Calu3 (cell line): ENCODE measurements at regions of chr3 and their contacts with region 1.

Region 1: DNA sequence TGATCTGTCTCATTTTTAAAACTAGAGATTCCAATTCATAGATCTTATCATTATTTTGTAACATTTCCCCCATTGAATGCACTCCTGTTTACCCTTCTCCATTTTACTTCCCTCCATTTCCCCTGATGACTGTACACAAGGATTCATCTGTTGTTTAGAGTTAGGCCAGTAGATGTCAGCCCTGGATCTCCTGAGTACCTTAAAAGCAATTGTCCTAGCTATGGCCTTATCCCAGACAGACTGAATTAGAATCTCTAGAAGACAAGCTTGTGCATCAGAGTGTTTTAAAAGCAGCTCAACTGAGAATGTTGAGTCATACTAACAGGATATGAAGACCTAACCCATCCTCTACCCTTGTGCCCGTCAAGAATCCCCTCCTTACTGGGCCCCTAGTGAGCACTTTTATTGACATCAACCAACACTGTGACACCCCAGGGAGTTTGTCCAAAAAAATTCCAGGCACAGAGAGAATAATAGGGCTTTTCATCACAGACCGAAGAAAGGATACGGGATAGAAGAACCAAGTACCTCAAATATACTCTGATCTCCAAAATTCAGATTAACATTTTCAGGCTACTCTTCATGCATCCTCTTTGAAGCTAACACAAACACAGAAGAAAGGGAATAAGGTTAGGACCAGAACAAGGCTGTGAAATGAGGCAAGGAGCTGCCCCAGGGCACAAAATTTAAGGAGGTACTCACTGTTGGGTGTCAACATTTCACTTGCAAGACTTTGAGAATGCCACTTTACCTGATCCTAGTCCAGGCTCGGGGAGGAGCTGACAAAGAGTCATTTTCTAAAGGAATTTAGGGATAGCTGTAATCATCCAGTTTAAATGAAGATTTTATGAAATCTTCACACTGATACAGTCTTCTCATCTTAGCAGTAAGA is 17.1 kb downstream of the ZBED2 start:
- DNase-seq: peak; percentile 32
- H3K4me3 Mint-ChIP-seq: no peak overlapping the region
- H3K27ac Mint-ChIP-seq: no peak overlapping the region
- H3K4me1 Mint-ChIP-seq: peaks cover 33% of the 10 kb centered on the region
- H3K27me3 Mint-ChIP-seq: no peaks in the 10 kb centered on the region
- CTCF ChIP-seq: no peak

Region 2: DNA sequence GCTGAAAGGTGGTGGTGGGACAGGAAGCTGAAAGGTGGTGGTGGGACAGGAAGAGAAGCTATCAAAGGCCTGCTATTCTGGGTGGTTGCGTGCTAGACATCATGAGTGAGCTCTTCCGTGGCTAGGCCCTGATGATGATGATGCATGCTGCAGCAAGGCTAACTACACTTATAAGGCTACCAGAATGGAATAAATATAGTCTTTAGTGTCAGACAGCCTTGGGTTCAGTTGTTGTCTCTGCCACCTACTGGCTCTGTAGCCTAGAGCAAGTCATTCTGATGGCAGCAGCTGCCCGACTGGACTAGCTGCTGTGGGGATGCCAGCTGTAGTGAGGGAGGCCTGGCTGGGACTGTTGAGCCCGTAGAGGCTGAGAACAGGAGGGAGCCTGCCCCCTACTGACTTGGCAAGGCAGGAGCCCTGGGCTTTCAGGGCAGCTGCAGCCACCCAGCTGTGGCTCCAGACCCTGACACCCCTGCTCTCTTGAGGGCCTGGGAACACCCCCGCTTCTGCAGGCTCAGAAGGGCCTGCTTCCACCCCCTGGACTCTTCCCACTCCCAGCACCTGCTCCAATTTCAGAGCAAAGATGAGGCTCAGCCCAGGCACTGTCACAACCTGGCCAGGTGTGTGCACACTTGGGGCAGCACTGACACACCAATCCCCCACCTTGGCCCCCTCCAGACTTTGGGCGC is 38.5 kb after region 1 on chr3:
- CTCF ChIA-PET with region 1: interaction called, 44 read pairs
- intact Hi-C with region 1: loop called (anchors 1 kb)
- DNase-seq: peak; percentile 67
- H3K4me3 Mint-ChIP-seq: no peak overlapping the region
- H3K27ac Mint-ChIP-seq: no peak overlapping the region
- H3K4me1 Mint-ChIP-seq: no peaks in the 10 kb centered on the region
- H3K27me3 Mint-ChIP-seq: no peaks in the 10 kb centered on the region
- CTCF ChIP-seq: peak; percentile 34

Region 3: DNA sequence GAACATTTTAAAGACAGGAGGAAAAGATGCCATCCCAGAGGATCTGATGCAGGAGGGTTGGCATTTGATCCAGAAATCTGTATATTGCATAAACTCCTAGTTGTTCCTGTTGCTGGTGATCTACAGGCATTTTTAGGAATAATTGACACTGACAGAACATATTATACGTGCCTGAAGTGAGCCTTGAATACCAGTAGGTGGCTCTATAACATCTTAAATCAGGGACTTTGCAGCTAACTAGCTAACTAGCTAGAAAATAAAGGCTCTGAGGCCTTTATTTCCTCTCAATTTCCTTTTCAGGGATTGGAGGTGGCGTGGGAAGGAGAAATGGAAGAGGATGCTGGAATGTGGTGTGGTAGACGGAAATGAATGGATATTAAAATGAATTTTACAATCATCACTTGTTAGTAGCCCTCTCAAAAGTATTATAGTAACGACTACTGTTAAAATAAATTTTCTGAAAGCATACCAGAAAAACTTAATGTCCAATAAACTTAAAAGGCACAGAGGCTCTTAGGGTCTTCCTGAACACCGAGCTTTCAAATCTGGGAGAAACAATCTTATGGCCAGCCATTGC is 91.0 kb after region 1 on chr3:
- CTCF ChIA-PET with region 1: interaction called, 18 read pairs
- intact Hi-C with region 1: loop called (anchors 5 kb)
- DNase-seq: no peak
- H3K4me3 Mint-ChIP-seq: no peak overlapping the region
- H3K27ac Mint-ChIP-seq: no peak overlapping the region
- H3K4me1 Mint-ChIP-seq: peaks cover 33% of the 10 kb centered on the region
- H3K27me3 Mint-ChIP-seq: no peaks in the 10 kb centered on the region
- CTCF ChIP-seq: peak; percentile 32

Region 4: GRCh38 chr3:111691293-111691909 is 113.4 kb after region 1 on chr3:
- CTCF ChIA-PET with region 1: interaction called, 22 read pairs
- intact Hi-C with region 1: loop called (anchors 2 kb)
- DNase-seq: no peak
- H3K4me3 Mint-ChIP-seq: no peak overlapping the region
- H3K27ac Mint-ChIP-seq: no peak overlapping the region
- H3K4me1 Mint-ChIP-seq: peaks cover 9% of the 10 kb centered on the region
- H3K27me3 Mint-ChIP-seq: no peaks in the 10 kb centered on the region
- CTCF ChIP-seq: no peak

Region 5: DNA sequence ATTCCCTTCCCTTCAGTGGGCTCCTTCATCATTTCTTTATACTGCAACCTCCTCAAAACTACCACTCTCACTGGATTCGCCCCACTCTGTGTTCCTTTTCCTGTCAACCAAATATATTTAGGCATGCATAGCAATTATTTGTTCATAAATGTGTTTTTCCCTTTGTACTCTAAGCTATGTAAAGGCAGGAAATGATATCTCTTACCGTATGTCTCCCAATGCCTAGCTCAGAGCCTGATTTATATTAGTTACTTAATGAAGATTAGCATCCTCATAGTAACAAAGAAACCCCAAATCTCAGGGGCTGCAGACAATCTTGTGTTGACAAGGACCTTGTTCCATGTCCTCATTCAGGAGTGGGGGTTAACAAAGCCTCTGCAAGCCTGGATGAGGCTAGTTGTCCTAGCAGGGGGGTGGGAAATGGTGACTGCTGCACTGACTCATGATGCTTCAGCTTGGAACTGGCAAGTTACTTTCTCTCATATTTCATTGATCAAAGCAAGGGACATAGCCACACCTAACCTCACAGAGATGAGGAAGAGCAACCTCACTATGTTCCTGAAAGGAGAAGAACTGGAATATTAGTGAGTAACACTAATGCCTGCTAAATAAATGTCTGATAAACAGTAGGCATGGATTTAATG is 296.3 kb after region 1 on chr3:
- CTCF ChIA-PET with region 1: no interaction called
- intact Hi-C with region 1: no loop called
- DNase-seq: no peak
- H3K4me3 Mint-ChIP-seq: no peak overlapping the region
- H3K27ac Mint-ChIP-seq: no peak overlapping the region
- H3K4me1 Mint-ChIP-seq: peaks cover 20% of the 10 kb centered on the region
- H3K27me3 Mint-ChIP-seq: no peaks in the 10 kb centered on the region
- CTCF ChIP-seq: no peak